ENCODE measurements at regions of chr3 and their contacts with region 1.

Region 1: GRCh38 chr3:126475413-126476114 is at the start of gene ZXDC:
- DNase-seq: peak; percentile 97 to 98
- ATAC-seq: peak; percentile 95
- H3K4me3 ChIP-seq: peak within 1 kb of the TSS; percentile 74 to 83
- H3K27ac ChIP-seq: peak within 1 kb of the TSS; percentile 65 to 93
- H3K4me1 ChIP-seq: peaks cover 0 to 4% of the 10 kb centered on the region in 2 donors
- H3K27me3 ChIP-seq: no peaks in the 10 kb centered on the region
- total RNA-seq, gene ZXDC: 35.7 to 37.5 TPM

Region 2: GRCh38 chr3:126259411-126260391 is 215.9 kb before region 1 on chr3:
- intact Hi-C with region 1: loop called (anchors 5 to 10 kb)
- DNase-seq: peak; percentile 76 to 87
- ATAC-seq: peak; percentile 85
- H3K4me3 ChIP-seq: no peak overlapping the region
- H3K27ac ChIP-seq: peak overlapping the region in 1 of 2 donors; percentile 59
- H3K4me1 ChIP-seq: no peaks in the 10 kb centered on the region
- H3K27me3 ChIP-seq: no peaks in the 10 kb centered on the region

Region 3: GRCh38 chr3:126267226-126267975 is 208.2 kb before region 1 on chr3:
- intact Hi-C with region 1: loop called in 1 of 2 experiments (anchors 10 kb)
- DNase-seq: peak; percentile 86 to 94
- ATAC-seq: peak; percentile 83
- H3K4me3 ChIP-seq: no peak overlapping the region
- H3K27ac ChIP-seq: peak overlapping the region; percentile 87 to 97
- H3K4me1 ChIP-seq: no peaks in the 10 kb centered on the region
- H3K27me3 ChIP-seq: no peaks in the 10 kb centered on the region

Region 4: DNA sequence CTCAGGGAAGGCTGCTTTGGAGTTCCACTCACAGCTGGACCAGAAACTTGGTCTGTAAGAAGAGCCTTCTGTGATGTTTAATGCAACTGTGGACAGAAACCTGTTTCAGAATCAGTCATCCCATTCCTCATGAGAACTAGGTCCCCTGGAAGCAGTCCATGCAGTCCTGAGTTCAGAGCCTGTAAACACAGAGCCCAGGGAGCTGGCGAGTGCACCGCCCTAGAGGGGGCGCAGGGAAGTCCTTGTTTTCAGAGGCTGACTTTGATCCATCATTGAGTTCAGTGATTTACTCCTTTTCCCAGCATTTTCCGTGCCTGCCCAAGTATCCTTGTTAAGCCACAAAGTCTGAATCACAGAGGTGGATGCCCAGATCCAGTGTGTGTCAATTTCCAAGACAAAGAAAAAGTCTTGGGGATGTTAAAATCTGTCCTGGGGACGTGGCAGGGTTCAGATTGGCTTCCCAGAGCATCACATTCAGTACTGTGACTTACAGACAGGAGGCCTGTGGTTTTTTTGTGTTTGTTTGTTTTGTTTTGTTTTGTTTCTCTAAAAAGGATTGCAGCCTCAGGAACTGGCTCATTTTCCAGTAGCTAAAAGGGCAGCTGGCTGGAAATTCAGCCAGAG is 189.1 kb after region 1 on chr3:
- intact Hi-C with region 1: no loop called
- DNase-seq: no peak
- ATAC-seq: no peak
- H3K4me3 ChIP-seq: no peak overlapping the region
- H3K27ac ChIP-seq: no peak overlapping the region
- H3K4me1 ChIP-seq: no peaks in the 10 kb centered on the region
- H3K27me3 ChIP-seq: no peaks in the 10 kb centered on the region

Measured in aorta (tissue), 5 donors.